Posterior vena cava (tissue), 2 donors: ENCODE measurements at regions of chr3 and their contacts with region 1.

Region 1: DNA sequence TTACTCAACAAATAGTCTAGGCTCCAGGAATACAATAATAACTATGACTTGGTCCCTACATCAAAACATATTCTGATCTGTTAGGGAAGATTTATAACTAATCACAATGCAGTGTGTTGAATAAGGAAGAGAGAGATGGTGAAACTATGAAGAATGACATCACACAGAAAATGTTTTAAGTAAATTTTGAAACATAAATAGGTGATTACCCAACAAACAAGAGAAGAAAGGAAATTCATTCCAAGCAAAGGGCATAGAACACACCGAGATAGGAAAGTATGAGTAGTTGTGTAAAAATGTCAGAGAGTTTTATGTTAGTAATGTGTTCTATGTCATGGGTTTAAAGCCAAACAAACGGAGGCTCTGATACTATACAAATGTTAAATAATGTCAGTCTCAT is 13.4 kb downstream of the SEC62 start:
- DNase-seq: no peak

Region 2: DNA sequence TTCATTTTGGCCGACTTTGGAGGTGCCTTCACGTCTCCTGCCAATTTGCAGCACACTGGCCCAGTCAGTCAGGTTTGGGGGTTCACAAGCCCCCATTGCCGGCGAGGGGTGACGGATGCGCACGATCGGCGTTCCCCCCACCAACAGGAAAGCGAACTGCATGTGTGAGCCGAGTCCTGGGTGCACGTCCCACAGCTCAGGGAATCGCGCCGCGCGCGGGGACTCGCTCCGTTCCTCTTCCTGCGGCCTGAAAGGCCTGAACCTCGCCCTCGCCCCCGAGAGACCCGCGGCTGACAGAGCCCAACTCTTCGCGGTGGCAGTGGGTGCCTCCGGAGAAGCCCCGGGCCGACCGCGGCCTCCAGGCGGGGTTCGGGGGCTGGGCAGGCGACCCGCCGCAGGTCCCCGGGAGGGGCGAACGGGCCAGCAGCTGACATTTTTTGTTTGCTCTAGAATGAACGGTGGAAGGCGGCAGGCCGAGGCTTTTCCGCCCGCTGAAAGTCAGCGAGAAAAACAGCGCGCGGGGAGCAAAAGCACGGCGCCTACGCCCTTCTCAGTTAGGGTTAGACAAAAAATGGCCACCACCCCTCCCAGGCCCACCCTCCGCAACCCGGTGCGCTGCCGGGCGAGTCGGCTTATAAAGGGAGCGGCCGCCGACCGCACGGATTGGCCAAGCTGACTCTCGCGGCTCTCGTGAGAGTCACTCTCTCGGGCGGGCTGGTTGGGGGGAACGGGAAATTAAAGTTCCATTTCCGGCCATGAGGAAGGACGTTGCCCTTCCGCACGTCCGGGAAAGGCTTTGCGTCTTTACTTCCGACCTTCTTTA is 215.4 kb before region 1 on chr3 and contains the start of gene TERC:
- intact Hi-C with region 1: no loop called
- DNase-seq: peak; percentile 98
- total RNA-seq, gene TERC: 2.6 to 6.3 TPM

Region 3: DNA sequence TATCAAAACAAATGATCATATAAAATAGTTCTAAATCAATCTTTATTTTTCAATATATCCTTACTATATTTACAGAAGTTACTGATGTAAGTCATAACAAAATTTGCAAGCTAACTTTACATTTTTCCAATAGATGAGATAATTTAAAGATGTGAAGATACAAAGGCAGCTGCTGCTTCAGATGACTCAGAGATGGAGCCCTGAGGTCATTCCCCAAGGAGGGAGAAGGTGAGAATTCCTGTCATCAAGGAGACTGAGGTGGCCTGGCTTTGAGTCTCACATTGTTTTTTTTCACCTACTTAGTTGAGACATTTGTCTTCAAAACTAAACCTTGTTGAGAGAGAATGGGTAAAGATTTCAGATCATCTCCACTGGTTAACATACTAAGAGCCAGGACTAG is 72.6 kb before region 1 on chr3:
- intact Hi-C with region 1: no loop called
- DNase-seq: no peak

Region 4: DNA sequence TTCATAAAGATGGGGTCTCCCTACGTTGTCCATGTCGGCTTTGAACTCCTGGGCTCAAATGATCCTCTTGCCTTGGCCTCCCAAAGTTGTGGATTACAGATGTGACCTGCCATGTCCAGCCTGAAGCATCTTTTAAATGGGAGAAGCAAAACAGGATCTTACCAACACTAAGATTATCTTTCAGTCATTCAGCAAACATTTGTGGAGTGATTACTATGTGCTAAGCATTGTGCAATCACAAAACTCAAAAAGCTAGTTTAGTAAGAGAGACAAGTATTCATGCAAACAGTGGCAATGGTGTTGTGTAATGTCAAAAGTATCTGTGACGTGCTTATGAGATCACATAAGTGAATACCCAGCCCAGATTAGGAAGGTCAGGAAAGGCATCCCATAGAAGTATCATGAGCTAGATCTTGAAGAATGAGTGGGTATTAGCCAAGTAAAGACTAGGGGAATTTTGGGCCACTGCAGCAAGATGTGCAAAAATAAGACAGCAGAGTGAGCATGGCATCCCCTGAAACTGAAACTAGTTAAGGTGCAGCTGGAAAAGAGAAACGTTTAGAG is 18.6 kb after region 1 on chr3:
- intact Hi-C with region 1: loop called in 1 of 2 experiments (anchors 1 kb)
- DNase-seq: no peak